Mammary epithelial cell (primary cell): ENCODE measurements at regions of chr11 and their contacts with region 1.

Region 1: DNA sequence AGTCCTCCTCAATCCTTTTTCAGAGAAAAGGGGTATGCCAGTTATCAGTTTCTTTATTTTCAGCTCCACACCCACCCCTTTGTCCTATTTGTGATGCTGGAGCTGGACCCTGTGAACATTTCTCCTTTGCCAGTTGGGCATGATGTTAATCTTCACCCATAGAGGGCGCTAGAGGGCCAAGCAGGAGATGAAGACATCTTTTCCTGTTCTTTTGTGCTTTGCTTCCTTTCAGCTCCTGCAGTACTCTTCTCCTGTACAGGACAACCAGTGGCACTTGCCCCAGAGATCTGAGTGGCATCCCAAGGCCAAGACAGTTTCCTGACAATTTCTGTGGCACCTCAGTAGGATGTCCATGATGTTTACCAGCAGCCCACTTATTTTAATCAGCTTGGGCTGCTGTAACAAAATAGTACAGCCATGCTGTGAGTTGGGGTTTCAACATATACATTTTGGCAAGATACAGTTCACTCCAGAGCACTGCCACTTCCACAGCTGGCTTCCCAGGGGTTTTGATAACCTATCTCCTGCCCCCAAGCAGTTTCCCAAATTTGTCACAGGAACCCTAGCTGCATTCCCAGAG is 4.6 kb downstream of the SAA2 start:
- DNase-seq: peak; percentile 55
- H3K4me3 ChIP-seq: no peak overlapping the region
- H3K27ac ChIP-seq: no peak overlapping the region
- H3K4me1 ChIP-seq: peaks cover 6% of the 10 kb centered on the region
- H3K27me3 ChIP-seq: no peaks in the 10 kb centered on the region
- CTCF ChIP-seq: peak; percentile 91

Region 2: DNA sequence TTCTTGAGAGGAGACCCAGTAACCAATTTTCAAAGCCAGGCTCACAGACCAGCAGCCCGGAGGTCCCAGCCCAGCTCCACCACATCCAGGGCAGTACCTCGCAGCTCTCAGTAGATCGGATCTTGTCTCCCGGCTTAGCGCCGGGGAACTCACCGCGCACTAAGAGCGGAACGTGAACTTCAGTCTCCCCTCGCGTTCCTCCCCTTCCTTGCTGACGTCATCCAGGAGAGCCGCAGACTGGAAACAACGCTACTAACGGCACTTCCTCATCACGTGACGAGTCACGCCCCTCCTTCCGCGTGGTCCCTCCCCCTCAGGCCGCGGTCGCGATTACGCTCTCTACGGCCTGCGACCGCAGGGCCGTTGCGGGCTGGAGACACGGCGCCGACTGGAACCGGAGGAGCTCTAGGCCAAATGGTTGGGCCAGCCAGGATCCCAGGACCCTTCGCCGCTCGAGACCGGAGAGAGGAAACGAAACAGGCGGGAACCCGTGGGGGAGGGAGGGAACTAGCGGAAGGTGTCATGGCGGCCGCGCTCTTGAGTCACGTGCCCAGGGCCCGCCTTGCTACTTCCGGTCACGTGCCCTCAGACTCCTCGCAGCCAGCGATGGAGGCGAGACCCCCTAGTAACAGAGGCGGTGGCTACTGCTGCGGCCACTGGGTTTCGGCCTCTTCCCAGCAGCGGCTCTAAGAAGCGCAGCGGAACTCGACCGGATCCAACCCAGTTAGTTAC is 78.3 kb after region 1 on chr11 and contains the starts of genes GTF2H1 and HPS5:
- CTCF ChIA-PET with region 1: no interaction called
- dilution Hi-C with region 1: no loop called
- in situ Hi-C with region 1: no loop called
- intact Hi-C with region 1: loop called (anchors 5 kb)
- DNase-seq: peak; percentile 98
- H3K4me3 ChIP-seq: peak within 1 kb of the TSS; percentile 78 to 98 (median 94)
- H3K27ac ChIP-seq: peak within 1 kb of the TSS; percentile 93
- H3K4me1 ChIP-seq: peaks cover 31% of the 10 kb centered on the region
- H3K27me3 ChIP-seq: no peaks in the 10 kb centered on the region
- CTCF ChIP-seq: no peak
- total RNA-seq, gene GTF2H1: 67.5 to 98.9 TPM
- total RNA-seq, gene HPS5: 34.2 to 108 TPM

Region 3: DNA sequence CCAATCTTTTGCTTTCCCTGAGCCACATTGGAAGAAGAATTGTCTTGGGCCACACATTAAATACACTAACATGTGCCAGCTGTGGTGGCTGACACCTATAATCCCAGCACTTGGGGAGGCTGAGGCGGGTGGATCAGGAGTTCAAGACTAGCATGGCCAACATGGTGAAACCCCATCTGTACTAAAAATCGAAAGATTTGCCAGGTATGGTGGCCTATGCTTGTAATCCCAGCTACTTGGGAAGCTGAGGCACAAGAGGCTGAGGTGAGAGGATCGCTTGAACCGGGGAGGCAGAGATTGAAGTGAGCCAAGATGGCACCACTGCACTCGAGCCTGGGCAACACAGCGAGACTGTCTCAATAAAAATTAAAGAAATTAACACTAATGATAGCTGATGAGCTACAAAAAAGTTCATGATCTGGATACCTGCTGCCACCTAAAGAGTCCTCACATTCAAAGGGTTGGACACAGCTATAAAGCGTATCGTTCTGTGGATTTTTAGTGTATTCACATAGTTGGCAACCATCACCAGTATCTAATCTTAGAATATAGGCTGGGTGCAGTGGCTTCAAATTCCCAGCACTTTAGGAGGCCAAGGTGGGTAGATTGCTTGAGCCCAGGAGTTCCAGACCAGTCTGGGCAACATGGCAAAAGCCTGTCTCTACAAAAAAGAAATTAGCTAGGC is 164.8 kb after region 1 on chr11:
- CTCF ChIA-PET with region 1: no interaction called
- dilution Hi-C with region 1: no loop called
- in situ Hi-C with region 1: no loop called
- intact Hi-C with region 1: no loop called
- DNase-seq: peak; percentile 57
- H3K4me3 ChIP-seq: no peak overlapping the region
- H3K27ac ChIP-seq: no peak overlapping the region
- H3K4me1 ChIP-seq: peaks cover 16% of the 10 kb centered on the region
- H3K27me3 ChIP-seq: no peaks in the 10 kb centered on the region
- CTCF ChIP-seq: no peak

Region 4: DNA sequence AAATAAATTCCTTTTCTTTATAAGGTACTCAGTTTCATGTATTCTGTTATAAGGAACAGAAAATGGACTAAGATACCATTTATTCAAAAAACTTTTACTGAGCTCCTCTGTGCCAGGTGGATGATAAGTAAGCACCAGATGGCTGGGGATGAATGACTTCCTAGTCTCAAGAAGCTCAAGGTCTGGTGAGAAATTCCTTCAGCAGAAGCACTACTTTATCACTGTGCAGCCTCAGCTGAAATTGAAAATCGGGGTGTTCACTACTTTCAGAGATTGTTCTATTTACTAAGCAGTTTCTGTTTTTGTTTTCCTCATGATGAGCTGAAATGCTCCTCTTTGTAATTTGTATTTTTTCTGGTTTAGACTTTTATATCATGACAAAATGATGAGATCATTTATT is 219.6 kb after region 1 on chr11:
- CTCF ChIA-PET with region 1: no interaction called
- dilution Hi-C with region 1: no loop called
- in situ Hi-C with region 1: no loop called
- intact Hi-C with region 1: loop called (anchors 1 kb)
- DNase-seq: no peak
- H3K4me3 ChIP-seq: no peak overlapping the region
- H3K27ac ChIP-seq: no peak overlapping the region
- H3K4me1 ChIP-seq: no peaks in the 10 kb centered on the region
- H3K27me3 ChIP-seq: no peaks in the 10 kb centered on the region
- CTCF ChIP-seq: no peak

Region 5: GRCh38 chr11:18526521-18527296 is 282.8 kb after region 1 on chr11 and contains the start of gene TSG101:
- CTCF ChIA-PET with region 1: no interaction called
- dilution Hi-C with region 1: no loop called
- in situ Hi-C with region 1: no loop called
- intact Hi-C with region 1: loop called (anchors 1 kb)
- DNase-seq: peak; percentile 89
- H3K4me3 ChIP-seq: peak within 1 kb of the TSS; percentile 78 to 96 (median 79)
- H3K27ac ChIP-seq: peak within 1 kb of the TSS; percentile 96
- H3K4me1 ChIP-seq: peaks cover 8% of the 10 kb centered on the region
- H3K27me3 ChIP-seq: no peaks in the 10 kb centered on the region
- CTCF ChIP-seq: no peak
- total RNA-seq, gene TSG101: 54.1 to 72.3 TPM

Region 6: DNA sequence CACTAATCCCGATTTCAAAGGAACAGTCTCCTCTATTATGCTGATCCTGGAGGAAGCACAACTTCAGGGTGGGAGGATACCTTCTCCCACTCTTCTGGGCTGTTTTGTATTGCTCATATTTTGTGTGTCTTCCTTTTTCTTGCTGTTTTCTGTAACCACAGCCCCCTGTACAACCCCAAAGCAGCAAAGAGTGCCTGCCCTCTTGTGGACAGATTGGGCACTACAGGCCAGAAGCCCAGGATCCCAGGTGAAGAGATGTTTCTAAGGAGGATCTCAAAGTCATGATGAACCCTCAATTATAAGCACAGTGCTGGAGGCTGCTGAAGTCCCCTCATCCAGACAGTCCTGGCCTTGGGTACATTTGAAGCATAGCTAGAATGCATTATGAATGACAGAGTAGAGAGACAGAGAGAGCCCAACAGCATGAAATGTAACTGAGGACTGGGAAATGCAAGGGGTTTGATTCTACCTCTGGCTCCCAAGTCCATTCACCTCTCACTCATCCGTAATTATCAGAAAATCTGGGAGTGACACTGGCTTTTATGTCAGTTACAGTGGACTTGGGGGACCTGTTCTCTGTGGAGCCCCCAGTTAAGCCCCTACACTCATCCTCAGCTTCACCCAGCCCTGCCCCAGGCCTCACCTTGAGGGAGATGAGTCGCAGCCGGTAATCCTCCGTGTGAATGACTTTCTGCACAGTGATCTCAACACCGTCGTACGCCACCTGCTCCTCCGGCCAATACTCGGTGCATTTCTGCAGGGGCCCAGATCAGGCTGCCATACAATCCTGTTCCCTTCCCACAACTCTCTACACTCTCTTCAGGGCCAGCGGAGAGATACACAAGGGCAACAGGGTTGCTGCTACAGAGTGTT is 488.3 kb after region 1 on chr11:
- CTCF ChIA-PET with region 1: no interaction called
- dilution Hi-C with region 1: no loop called
- in situ Hi-C with region 1: no loop called
- intact Hi-C with region 1: loop called (anchors 2 kb)
- DNase-seq: peak; percentile 24
- H3K4me3 ChIP-seq: no peak overlapping the region
- H3K27ac ChIP-seq: no peak overlapping the region
- H3K4me1 ChIP-seq: no peaks in the 10 kb centered on the region
- H3K27me3 ChIP-seq: no peaks in the 10 kb centered on the region
- CTCF ChIP-seq: peak; percentile 97 to 99